Endothelial cell of umbilical vein (primary cell): ENCODE measurements at regions of chr19 and their contacts with region 1.

Region 1: DNA sequence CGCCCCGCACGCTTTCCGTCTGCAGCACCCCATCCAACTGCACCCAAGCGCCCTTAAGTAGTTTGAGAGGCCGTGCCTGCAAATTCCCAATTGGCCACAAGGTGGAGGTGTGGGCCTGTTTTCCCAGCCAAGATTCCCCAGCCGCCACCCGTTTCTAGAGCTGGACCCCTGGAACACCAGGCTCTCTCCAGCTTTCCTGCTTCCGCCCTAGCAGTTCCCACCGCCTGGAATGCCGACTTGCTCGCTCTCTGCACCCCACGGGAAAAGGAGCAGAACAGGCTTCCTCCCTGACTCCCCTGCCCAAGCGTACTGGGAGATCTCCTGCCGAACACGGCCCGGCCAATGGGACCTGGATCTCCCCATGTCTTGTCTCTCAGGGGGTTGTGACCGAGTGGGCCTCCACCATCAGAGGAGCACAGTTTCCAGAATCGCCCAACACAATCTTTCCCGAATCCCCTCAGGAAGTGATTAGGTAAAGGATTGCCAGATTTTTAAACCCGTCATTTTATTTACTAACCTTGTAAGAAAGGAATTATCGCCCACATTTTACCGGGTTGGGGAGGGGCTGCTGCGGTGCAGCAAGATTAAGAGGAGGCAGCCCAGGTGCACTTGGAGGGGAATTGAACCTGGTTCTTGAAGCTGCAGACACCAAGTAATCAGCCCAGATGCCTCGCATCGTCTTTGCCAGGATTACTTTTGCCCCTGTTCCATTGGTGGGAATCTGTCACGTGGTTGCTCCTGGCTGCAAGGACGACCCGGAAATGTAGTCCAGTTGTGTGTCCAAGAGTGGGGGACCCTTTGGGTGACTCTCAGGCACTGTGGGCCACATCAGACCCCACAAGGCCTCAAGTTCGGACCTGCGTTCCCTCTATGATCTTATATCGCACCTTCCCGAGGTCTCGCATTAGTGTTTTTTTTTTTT is 3.5 kb upstream of the NAPSA start:
- DNase-seq: peak; percentile 80
- H3K4me3 ChIP-seq: peak overlapping the region; percentile 20 to 53 (median 42)
- H3K27ac ChIP-seq: peak overlapping the region; percentile 19
- H3K4me1 ChIP-seq: peaks cover 5% of the 10 kb centered on the region
- H3K27me3 ChIP-seq: no peaks in the 10 kb centered on the region
- CTCF ChIP-seq: peak; percentile 71 to 84
- POLR2A ChIP-seq: no peak

Region 2: GRCh38 chr19:50401605-50402450 is 32.9 kb after region 1 on chr19:
- CTCF ChIA-PET with region 1: interaction called, 3 read pairs
- POLR2A ChIA-PET with region 1: no interaction called
- dilution Hi-C with region 1: no loop called
- intact Hi-C with region 1: loop called (anchors 1 kb)
- DNase-seq: no peak
- H3K4me3 ChIP-seq: no peak overlapping the region
- H3K27ac ChIP-seq: no peak overlapping the region
- H3K4me1 ChIP-seq: no peaks in the 10 kb centered on the region
- H3K27me3 ChIP-seq: no peaks in the 10 kb centered on the region
- CTCF ChIP-seq: no peak
- POLR2A ChIP-seq: no peak

Region 3: DNA sequence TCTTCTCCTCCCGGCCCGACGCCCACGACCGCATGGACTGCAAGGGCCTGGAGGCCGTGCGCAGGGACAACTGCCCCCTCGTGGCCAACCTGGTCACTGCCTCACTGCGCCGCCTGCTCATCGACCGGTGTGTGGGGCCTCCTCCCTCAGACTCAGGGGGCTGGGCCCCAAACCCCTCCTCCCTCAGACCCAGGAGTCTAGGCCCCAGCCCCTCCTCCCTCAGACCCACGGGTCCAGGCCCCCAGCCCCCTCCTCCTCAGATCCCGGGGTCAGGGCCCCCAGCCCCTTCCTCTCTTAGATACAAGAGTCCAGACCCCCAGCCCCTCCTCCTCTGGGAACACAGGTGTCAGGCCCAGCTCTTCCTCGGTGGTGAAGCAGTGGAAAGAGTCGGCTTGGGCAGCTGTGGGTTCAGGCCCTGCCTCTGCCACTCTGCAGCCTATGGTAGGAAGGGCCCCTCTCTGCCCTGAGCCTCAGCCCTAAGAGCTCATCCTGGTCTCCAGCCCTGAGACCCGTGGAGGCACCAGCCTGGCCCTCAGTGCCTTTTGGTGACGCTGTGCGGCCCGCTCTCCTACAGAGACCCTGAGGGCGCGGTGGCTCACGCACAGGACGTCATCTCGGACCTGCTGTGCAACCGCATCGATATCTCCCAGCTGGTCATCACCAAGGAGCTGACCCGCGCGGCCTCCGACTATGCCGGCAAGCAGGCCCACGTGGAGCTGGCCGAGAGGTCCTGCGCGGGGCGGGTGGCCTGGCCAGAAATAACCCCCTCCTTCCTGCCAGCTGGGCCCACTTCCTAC is 46.2 kb after region 1 on chr19:
- CTCF ChIA-PET with region 1: interaction called, 88 read pairs
- POLR2A ChIA-PET with region 1: no interaction called
- dilution Hi-C with region 1: no loop called
- intact Hi-C with region 1: loop called (anchors 1 kb)
- DNase-seq: peak; percentile 60
- H3K4me3 ChIP-seq: no peak overlapping the region
- H3K27ac ChIP-seq: no peak overlapping the region
- H3K4me1 ChIP-seq: no peaks in the 10 kb centered on the region
- H3K27me3 ChIP-seq: peaks cover 15 to 18% of the 10 kb centered on the region in 2 experiments
- CTCF ChIP-seq: peak; percentile 87 to 98
- POLR2A ChIP-seq: no peak

Region 4: DNA sequence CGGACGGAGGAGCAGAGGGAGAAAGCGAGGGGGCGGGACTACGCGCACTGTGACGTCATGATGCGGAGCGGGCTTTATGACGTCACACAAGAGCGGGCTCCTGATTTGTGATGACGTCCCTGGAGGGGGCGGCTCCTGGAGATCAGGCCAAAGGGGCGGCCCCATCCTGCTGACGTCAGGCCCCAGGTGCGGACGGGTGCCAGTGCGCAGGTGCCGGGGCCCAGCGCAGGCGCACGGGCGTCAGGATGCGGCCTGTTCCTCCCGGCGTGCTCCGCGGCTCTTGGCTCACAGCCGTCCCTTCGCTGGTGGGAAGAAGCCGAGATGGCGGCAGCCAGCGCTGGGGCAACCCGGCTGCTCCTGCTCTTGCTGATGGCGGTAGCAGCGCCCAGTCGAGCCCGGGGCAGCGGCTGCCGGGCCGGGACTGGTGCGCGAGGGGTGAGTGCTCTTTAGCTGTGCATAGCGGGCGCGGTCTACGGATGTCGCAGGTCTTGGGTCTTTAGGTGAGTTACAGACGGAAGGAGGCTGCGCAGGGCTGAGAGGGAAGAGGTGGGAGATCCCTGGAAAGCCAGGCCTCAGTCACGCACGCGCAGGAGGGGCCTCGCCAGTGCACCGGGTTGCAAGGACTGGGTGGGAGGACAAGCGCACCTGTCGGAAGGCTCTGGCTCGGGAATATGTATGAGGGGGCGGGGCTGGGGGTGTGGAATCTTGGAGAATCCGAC is 107.5 kb after region 1 on chr19 and contains the starts of genes EMC10 and GARIN5A:
- CTCF ChIA-PET with region 1: interaction called, 8 read pairs
- POLR2A ChIA-PET with region 1: no interaction called
- dilution Hi-C with region 1: no loop called
- intact Hi-C with region 1: loop called (anchors 1 kb)
- DNase-seq: peak; percentile 94
- H3K4me3 ChIP-seq: peak within 1 kb of the TSS; percentile 84 to 98 (median 87)
- H3K27ac ChIP-seq: peak within 1 kb of the TSS; percentile 48
- H3K4me1 ChIP-seq: peaks cover 7% of the 10 kb centered on the region
- H3K27me3 ChIP-seq: no peaks in the 10 kb centered on the region
- CTCF ChIP-seq: no peak
- POLR2A ChIP-seq: peak; percentile 96
- total RNA-seq, gene EMC10: 101 and 106 TPM in 2 replicates
- total RNA-seq, gene GARIN5A: 0.44 and 0.62 TPM in 2 replicates